MCF 10A (cell line): ENCODE measurements at regions of chr11 and their contacts with region 1.

Region 1: DNA sequence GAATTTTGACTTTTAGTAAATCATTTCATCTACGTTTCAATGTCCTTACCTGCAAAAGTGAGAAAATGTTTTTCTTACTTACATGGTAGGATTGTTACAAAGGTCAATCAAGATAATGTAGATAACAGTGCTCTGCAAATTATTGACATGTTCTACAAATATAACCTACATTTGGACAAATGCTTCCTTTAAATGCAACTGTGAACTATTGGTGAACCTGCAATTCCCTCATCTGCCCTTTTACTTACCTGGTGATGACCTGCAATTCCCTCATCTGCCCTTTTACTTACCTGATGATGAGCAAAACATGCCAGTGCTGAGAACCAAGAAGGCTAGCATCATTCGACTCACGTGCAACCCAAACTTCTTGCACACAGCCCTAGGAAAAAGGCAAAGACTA is 11.1 kb downstream of the ALG9 start:
- DNase-seq: no peak
- H3K4me3 Mint-ChIP-seq: no peak overlapping the region
- H3K27ac Mint-ChIP-seq: no peak overlapping the region
- H3K4me1 Mint-ChIP-seq: no peaks in the 10 kb centered on the region
- H3K27me3 Mint-ChIP-seq: no peaks in the 10 kb centered on the region
- CTCF ChIP-seq: no peak

Region 2: GRCh38 chr11:111829185-111829968 is 30.9 kb before region 1 on chr11:
- CTCF ChIA-PET with region 1: no interaction called
- POLR2A ChIA-PET with region 1: no interaction called
- intact Hi-C with region 1: no loop called
- DNase-seq: no peak
- H3K4me3 Mint-ChIP-seq: no peak overlapping the region
- H3K27ac Mint-ChIP-seq: no peak overlapping the region
- H3K4me1 Mint-ChIP-seq: no peaks in the 10 kb centered on the region
- H3K27me3 Mint-ChIP-seq: no peaks in the 10 kb centered on the region
- CTCF ChIP-seq: no peak

Region 3: DNA sequence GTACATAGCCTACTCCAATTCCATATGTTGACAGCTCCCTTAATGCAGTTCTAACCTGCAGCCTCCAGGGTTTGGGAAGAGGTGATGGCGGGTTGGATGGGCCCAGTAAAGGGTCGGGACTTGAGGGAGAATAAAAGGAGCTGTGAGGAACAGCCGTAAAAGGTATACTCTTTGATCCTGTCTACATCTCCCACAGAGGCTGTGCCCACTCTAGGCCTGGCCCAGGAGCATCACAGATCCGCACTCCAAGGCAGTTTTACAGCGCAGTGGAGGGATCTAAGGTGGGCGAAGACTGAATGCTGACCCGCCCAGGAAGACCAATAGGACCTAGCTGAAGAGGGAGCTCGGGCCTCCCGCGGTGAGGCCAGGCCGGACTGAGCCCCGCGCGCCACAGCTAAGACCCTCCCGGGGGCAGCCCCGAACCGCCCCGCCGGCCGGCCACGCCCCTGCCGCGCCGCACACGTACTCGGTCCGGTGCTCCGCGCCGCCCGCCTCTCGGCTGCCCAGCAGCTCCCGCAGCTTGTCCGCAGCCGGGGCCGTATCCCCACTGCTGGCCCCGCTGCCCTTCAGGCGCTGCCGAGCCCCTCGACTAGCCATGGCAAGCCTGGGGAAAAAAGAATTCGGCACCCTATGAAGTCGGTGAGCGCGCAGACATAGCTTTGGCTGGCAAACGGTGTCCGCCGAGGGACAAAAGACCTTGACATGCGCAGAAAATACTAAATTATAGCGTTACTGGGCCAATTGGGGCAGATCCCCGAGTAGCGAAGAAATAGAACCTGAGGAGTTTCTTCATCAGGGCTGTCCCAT is 10.8 kb after region 1 on chr11 and contains the start of gene ALG9:
- CTCF ChIA-PET with region 1: interaction called, 3 read pairs
- POLR2A ChIA-PET with region 1: interaction called, 29 read pairs
- intact Hi-C with region 1: no loop called
- DNase-seq: peak; percentile 82
- H3K4me3 Mint-ChIP-seq: peak within 1 kb of the TSS; percentile 96
- H3K27ac Mint-ChIP-seq: peak within 1 kb of the TSS; percentile 57
- H3K4me1 Mint-ChIP-seq: peaks cover 12% of the 10 kb centered on the region
- H3K27me3 Mint-ChIP-seq: no peaks in the 10 kb centered on the region
- CTCF ChIP-seq: peak; percentile 44
- total RNA-seq, gene ALG9: 28.8 and 31.2 TPM in 2 replicates

Region 4: GRCh38 chr11:111935317-111936039 is 75.2 kb after region 1 on chr11:
- CTCF ChIA-PET with region 1: no interaction called
- POLR2A ChIA-PET with region 1: no interaction called
- intact Hi-C with region 1: no loop called
- DNase-seq: no peak
- H3K4me3 Mint-ChIP-seq: no peak overlapping the region
- H3K27ac Mint-ChIP-seq: no peak overlapping the region
- H3K4me1 Mint-ChIP-seq: peaks cover 49% of the 10 kb centered on the region
- H3K27me3 Mint-ChIP-seq: no peaks in the 10 kb centered on the region
- CTCF ChIP-seq: no peak